ENCODE measurements at regions of chrX and their contacts with region 1.

Region 1: DNA sequence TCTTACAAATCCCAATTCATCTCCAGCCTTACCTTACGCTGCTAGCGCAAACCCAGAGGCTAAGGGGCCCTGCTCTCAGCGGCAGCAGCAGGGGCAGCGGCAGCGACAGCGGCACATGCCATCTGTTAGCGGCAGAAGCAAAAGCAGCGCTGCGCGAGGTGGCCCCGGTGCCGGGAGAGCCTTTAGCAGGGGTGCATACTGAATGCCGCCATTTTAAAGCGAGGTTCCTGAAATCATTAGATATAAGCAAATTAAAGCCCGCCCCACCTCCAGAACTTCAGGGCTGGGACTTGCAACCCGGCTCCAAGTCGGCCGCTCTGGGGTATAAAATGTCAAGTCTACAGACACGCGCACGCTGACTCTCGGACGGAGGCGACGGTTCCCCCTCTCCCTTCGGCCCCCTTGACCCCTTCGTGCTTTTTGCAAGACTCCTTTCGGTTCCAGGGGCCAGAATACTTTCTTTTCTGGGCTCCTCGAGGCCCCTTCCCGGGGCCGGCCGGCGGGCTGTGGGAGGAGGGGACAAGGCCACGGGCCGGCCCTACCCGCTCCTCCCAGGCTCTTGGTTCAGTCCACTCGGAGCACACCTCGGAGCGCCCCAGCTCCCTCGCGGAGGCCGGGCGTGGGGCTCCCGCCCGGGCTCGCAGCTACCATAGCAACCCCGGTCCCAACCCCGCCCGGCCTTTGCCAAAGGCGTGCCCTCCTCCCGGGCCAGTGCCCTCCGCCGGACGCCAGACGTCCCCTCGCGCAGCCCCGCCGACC is at the start of gene MBNL3:
- DNase-seq: peak; percentile 87
- H3K4me3 Mint-ChIP-seq: peak within 1 kb of the TSS; percentile 93
- H3K27ac Mint-ChIP-seq: peak within 1 kb of the TSS; percentile 97
- H3K4me1 Mint-ChIP-seq: peaks cover 24% of the 10 kb centered on the region
- H3K27me3 Mint-ChIP-seq: peaks cover 10% of the 10 kb centered on the region
- total RNA-seq, gene MBNL3: 12.2 and 15.4 TPM in 2 replicates

Region 2: DNA sequence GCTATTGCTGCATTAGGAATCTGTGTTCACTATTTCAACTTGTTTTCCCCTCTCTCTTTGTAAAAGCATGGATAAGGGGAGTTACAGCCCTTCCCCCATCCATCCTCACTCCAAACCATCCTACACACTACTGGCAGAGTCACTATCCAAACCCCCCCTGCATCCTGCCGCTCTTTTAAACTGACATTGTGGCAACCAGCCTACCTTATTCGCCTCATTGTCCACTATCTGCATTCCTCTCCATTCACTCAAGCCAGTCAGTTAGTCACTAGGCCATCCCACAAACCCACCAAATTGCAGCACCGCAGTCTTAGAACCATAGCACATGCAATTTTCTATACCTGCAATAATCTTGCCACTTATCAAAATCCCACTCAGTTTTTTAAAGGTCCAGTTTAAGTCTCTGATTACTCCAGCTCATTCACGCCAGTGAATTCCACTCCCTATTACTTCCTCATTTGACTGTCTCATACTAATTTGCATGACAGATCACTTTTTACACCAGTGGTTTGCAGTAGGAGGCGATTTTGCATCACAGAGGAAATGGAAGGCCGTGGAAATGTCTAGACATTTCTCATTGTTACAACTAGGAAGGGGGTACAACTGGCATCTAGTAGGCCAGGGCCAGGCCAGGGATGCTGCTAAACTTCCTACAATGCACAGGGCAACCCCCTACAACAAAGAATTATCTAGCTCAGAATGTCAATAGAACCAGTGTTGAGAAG is 287.6 kb after region 1 on chrX:
- intact Hi-C with region 1: loop called (anchors 10 kb)
- DNase-seq: no peak
- H3K4me3 Mint-ChIP-seq: no peak overlapping the region
- H3K27ac Mint-ChIP-seq: peak overlapping the region; percentile 52
- H3K4me1 Mint-ChIP-seq: peaks cover 12% of the 10 kb centered on the region
- H3K27me3 Mint-ChIP-seq: no peaks in the 10 kb centered on the region

Measured in activated CD4-positive, alpha-beta T cell treated with anti-CD3 and anti-CD28 coated beads, Interleukin-2, amount 10 ng/mL, durations not matched to agents 24 days and 14 days (primary cell).